Dendritic cell treated with granulocyte-macrophage colony-stimulating factor and Interleukin-4, amounts not matched to agents 40 ng/mL and 50 ng/mL, for 4 days (primary cell): ENCODE measurements at regions of chr6 and their contacts with region 1.

Region 1: GRCh38 chr6:158972241-158973233 is 27.5 kb downstream of the RSPH3 start:
- H3K4me3 Mint-ChIP-seq: no peak overlapping the region
- H3K27ac Mint-ChIP-seq: no peak overlapping the region
- H3K4me1 Mint-ChIP-seq: peaks cover 3% of the 10 kb centered on the region
- H3K27me3 Mint-ChIP-seq: no peaks in the 10 kb centered on the region

Region 2: DNA sequence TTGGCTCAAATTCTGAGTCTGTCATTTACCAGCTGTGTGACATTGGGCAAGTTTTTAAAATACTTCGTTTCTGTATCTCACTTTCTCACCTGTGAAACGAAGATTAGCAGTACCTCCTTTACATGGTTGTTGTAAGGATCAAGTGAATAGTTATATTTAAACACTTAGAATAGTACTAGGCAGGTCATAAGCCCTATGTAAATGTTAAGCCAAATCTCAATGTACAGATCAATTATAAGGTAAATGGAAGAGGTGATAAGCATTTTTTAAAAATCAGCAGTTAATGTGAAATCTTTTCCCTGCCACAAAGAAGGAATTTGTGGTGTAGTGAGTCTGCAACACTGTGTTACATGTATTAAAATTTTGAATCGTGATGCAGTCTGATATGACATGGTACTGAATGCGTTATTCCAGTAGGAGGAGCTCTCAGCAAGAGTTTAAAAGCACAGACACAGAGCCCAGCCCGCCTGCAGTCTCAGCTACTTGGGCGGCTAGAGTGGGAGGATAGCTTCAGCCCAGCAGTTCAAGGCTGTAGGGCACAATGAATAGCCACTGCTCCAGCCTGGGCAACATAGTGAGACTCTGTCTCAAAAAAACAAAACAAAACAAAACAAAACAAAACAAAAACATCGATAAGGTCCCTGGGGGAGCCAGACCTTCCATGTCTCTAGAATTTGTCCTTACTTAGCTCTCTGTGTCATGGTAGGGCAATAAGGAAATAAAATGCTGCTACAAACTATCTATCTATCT is 758.4 kb before region 1 on chr6:
- intact Hi-C with region 1: loop called (anchors 10 kb)
- H3K4me3 Mint-ChIP-seq: no peak overlapping the region
- H3K27ac Mint-ChIP-seq: no peak overlapping the region
- H3K4me1 Mint-ChIP-seq: peaks cover 4% of the 10 kb centered on the region
- H3K27me3 Mint-ChIP-seq: peaks cover 4% of the 10 kb centered on the region

Region 3: GRCh38 chr6:158704181-158704822 is 268.2 kb before region 1 on chr6:
- intact Hi-C with region 1: loop called (anchors 1 kb)
- H3K4me3 Mint-ChIP-seq: peak overlapping the region; percentile 93
- H3K27ac Mint-ChIP-seq: peak overlapping the region; percentile 68
- H3K4me1 Mint-ChIP-seq: peaks cover 15% of the 10 kb centered on the region
- H3K27me3 Mint-ChIP-seq: no peaks in the 10 kb centered on the region

Region 4: DNA sequence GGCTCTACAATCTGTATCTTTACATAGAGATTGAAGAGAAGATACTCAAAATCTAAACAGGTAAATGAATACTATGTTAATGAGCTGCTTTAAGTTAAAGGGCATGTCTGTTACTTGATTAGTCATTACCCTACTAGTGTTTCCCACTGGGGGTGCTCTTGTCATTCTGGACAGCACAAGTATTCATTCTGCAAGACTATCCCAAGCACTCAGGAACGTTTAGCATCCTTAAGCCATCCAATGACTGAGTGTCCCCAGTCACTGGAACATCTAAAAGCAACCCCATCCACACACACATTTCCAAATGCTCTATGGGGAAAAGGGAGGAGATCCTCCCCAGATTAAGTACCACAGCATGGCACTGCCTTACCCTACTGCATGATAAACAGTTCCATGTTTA is 179.1 kb before region 1 on chr6:
- intact Hi-C with region 1: loop called (anchors 5 kb)
- H3K4me3 Mint-ChIP-seq: no peak overlapping the region
- H3K27ac Mint-ChIP-seq: no peak overlapping the region
- H3K4me1 Mint-ChIP-seq: peaks cover 20% of the 10 kb centered on the region
- H3K27me3 Mint-ChIP-seq: no peaks in the 10 kb centered on the region

Region 5: DNA sequence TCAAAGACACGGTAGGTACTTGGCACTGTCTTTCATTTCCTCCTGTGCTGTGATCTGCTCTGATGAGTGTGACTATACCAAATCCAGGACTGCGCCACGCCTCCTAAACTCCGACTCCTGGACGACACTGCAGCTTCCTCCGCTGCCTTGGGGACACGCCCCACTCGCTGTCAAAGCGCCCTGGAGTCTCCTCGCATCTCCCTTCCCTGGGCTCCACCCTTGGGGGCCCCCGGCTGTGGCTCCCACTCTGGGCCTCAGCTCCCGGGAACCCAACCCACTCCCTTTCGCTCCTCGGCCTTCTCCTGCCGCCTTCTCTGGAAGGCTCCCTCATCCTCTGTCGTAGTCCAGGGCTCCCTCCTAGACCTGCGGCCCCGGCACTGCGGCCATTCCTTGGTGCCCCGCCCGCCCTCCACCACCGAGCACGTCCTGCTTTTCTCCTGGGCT is 33.7 kb before region 1 on chr6:
- intact Hi-C with region 1: no loop called
- H3K4me3 Mint-ChIP-seq: peak overlapping the region; percentile 66
- H3K27ac Mint-ChIP-seq: no peak overlapping the region
- H3K4me1 Mint-ChIP-seq: peaks cover 20% of the 10 kb centered on the region
- H3K27me3 Mint-ChIP-seq: peaks cover 31% of the 10 kb centered on the region